SK-N-SH (cell line): ENCODE measurements at regions of chr18 and their contacts with region 1.

Region 1: DNA sequence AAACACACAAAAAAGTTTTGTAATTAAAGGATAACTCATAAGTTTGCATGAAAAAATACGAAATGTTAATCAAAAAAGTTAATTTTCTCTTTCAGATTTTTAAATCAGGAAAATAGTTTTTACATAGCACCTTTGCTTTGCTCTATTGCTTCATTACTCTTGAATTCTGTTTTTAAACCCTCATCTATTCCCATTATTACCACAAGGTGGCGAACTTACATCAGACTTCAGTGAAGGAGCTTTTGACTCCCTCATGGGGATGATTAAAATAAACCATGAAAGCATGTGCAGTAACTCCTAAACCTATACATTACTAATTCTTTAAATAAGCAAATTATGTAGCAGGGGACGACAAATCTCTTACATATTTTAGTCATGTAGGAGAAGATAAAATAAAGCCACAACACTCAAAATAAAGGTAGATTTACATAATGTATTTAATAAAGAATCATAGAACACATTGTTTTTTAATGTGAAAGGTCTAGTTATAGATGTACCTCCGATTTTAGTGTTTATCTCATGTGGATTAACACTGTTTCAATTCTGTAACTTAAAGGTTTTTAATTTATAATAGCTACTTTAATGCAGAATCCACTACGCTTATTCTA is 105.2 kb downstream of the NETO1 start:
- DNase-seq: peak; percentile 30
- H3K4me3 ChIP-seq: no peak overlapping the region
- H3K27ac ChIP-seq: no peak overlapping the region
- H3K4me1 ChIP-seq: no peaks in the 10 kb centered on the region
- H3K27me3 ChIP-seq: peaks cover 10% of the 10 kb centered on the region
- CTCF ChIP-seq: peak; percentile 86
- EP300 ChIP-seq: no peak
- RAD21 ChIP-seq: peak; percentile 83

Region 2: DNA sequence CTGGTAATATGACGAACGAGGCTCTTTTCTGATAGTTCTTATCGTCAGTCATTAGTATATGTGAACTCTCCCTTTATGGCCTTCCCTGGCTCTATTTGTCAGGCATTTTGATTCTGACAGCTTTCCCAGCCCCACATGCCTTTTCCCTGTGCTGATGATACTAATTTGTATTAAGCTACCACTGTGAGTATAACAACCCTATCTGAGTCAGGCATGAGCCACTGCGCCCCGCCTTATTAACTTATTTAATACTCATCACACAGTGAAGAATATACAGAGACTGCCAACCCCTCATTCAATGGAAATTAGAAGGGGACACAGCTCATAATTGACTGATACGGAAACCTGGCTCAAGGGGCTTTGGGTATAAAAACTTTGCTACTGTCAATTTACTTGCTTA is 34.8 kb before region 1 on chr18:
- CTCF ChIA-PET with region 1: interaction called, 11 read pairs
- POLR2A ChIA-PET with region 1: no interaction called
- DNase-seq: no peak
- H3K4me3 ChIP-seq: no peak overlapping the region
- H3K27ac ChIP-seq: no peak overlapping the region
- H3K4me1 ChIP-seq: no peaks in the 10 kb centered on the region
- H3K27me3 ChIP-seq: no peaks in the 10 kb centered on the region; the same call in 1 of the 2 replicates
- CTCF ChIP-seq: no peak
- EP300 ChIP-seq: no peak
- RAD21 ChIP-seq: no peak

Region 3: GRCh38 chr18:72752220-72752619 is 10.4 kb before region 1 on chr18:
- CTCF ChIA-PET with region 1: interaction called, 12 read pairs
- POLR2A ChIA-PET with region 1: no interaction called
- DNase-seq: no peak
- H3K4me3 ChIP-seq: no peak overlapping the region
- H3K27ac ChIP-seq: no peak overlapping the region
- H3K4me1 ChIP-seq: no peaks in the 10 kb centered on the region
- H3K27me3 ChIP-seq: no peaks in the 10 kb centered on the region
- CTCF ChIP-seq: no peak
- EP300 ChIP-seq: no peak
- RAD21 ChIP-seq: no peak

Region 4: GRCh38 chr18:72772916-72773315 is 10.3 kb after region 1 on chr18:
- CTCF ChIA-PET with region 1: interaction called, 20 read pairs
- POLR2A ChIA-PET with region 1: no interaction called
- DNase-seq: no peak
- H3K4me3 ChIP-seq: no peak overlapping the region
- H3K27ac ChIP-seq: no peak overlapping the region
- H3K4me1 ChIP-seq: no peaks in the 10 kb centered on the region
- H3K27me3 ChIP-seq: no peaks in the 10 kb centered on the region; the same call in 1 of the 2 replicates
- CTCF ChIP-seq: no peak
- EP300 ChIP-seq: no peak
- RAD21 ChIP-seq: no peak

Region 5: DNA sequence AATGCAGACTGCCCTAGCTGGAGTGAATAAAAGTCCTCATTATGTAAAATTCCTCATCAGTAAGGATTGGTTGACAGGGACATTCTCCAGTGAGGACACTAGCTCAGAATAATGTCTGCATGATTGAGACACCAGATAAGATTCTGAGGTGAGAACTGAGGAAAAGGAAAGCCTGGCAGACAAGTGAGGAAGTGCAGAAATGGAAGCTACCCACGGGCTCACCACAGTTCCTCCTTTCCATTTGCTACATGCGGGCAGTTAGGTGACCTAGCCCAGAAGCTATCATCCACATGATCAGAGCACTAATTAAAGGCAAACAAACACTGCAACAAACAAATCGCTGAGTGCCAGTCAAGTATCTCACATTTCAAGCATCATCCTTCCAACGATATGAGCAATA is 77.5 kb after region 1 on chr18:
- CTCF ChIA-PET with region 1: no interaction called
- POLR2A ChIA-PET with region 1: no interaction called
- DNase-seq: no peak
- H3K4me3 ChIP-seq: no peak overlapping the region
- H3K27ac ChIP-seq: no peak overlapping the region
- H3K4me1 ChIP-seq: no peaks in the 10 kb centered on the region
- H3K27me3 ChIP-seq: no peaks in the 10 kb centered on the region
- CTCF ChIP-seq: no peak
- EP300 ChIP-seq: no peak
- RAD21 ChIP-seq: no peak

Region 6: GRCh38 chr18:73520229-73520628 is 757.6 kb after region 1 on chr18:
- CTCF ChIA-PET with region 1: interaction called, 13 read pairs
- POLR2A ChIA-PET with region 1: no interaction called
- DNase-seq: peak; percentile 2
- H3K4me3 ChIP-seq: no peak overlapping the region
- H3K27ac ChIP-seq: no peak overlapping the region
- H3K4me1 ChIP-seq: no peaks in the 10 kb centered on the region
- H3K27me3 ChIP-seq: no peaks in the 10 kb centered on the region
- CTCF ChIP-seq: peak; percentile 41; the same call in 1 of the 2 replicates
- EP300 ChIP-seq: no peak
- RAD21 ChIP-seq: peak; percentile 50

Region 7: DNA sequence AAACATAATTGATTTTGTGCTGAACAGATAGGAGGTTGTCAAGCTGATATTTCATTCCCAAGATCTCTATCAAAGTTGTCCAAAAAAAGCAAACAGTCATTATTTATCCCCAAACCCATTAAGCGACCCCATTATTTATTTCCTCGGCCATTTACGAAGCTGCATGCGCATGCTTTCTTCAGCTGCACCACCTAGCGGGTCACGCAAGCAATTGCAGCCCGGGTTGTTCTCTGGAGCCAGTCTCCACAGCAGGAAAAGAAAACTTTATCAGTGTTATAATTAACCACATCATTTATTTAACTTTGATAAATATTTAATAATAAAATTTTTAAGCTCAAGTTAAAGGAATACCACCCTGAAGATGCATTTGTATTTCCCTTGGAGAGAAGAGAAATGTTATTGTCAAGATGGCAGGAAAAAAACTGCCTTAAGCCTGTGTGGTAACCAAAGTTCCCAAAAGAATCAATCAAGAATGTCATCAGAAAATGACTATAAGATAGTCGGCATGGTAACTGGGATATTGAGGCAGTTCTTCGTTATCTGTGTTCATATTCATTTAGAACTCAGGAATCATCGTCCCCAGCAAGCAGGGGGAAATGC is 1080.3 kb after region 1 on chr18:
- CTCF ChIA-PET with region 1: interaction called, 73 read pairs
- POLR2A ChIA-PET with region 1: no interaction called
- DNase-seq: peak; percentile 49
- H3K4me3 ChIP-seq: peak overlapping the region in 1 of 2 experiments; percentile 49; a peak in 2 of 4 replicates
- H3K27ac ChIP-seq: no peak overlapping the region
- H3K4me1 ChIP-seq: no peaks in the 10 kb centered on the region
- H3K27me3 ChIP-seq: peaks cover 14% of the 10 kb centered on the region; the same call in 1 of the 2 replicates
- CTCF ChIP-seq: peak; percentile 97
- EP300 ChIP-seq: no peak
- RAD21 ChIP-seq: peak; percentile 77